ENCODE measurements at regions of chr2 and their contacts with region 1.

Region 1: GRCh38 chr2:158753641-158754611 is 41.2 kb upstream of the DAPL1 start:
- DNase-seq: peak; percentile 17 to 56
- H3K4me3 ChIP-seq: peak overlapping the region in 1 of 4 experiments; percentile 39; a peak in 1 of 8 replicates
- H3K27ac ChIP-seq: no peak overlapping the region
- H3K4me1 ChIP-seq: peaks cover 0 to 2% (median 0%) of the 10 kb centered on the region in 4 experiments; a peak in 1 of 7 replicates
- H3K27me3 ChIP-seq: no peaks in the 10 kb centered on the region
- CTCF ChIP-seq: peak; percentile 50 to 88 (median 88)
- EP300 ChIP-seq: no peak
- POLR2A ChIP-seq: no peak
- RAD21 ChIP-seq: peak; percentile 87 to 89

Region 2: DNA sequence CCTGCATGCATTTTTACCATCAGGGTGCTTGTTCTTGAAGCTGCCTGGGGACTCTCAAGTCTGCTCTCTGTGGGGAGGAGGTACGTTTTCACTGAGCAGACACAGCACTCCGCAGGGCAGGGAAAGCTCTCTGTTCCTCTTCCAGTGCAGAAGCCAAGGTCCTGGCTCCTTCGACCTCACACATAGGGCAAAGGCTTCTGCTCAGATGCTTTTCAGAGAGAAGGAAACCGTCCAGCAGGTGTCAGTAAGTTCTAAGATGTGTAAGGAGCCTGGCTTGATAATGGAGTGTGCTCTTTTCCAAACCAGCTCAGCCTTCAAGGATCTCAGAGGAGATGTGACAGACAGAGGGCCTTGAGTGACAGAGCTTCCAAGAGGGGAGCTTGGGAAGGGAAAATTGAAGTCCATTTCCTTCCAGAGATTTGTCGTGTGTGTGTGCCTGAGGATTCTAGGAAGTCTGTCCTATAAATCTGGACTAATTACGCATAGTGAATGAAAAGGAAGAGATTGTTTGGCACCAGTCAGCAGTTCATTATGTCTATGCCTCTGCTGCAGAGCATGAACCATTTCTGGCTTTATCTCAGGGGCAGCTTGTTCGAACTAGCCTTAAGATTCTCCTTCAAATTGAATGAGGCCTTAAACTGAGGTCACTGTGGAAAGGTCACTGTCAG is 719.6 kb before region 1 on chr2:
- CTCF ChIA-PET with region 1: interaction called, 89 read pairs
- POLR2A ChIA-PET with region 1: no interaction called
- DNase-seq: no peak
- H3K4me3 ChIP-seq: no peak overlapping the region
- H3K27ac ChIP-seq: no peak overlapping the region
- H3K4me1 ChIP-seq: no peaks in the 10 kb centered on the region
- H3K27me3 ChIP-seq: no peaks in the 10 kb centered on the region
- CTCF ChIP-seq: peak in 2 of 3 experiments; percentile 80 to 81; a peak in 3 of 4 replicates
- EP300 ChIP-seq: no peak
- POLR2A ChIP-seq: no peak
- RAD21 ChIP-seq: peak; percentile 90 to 94

Region 3: DNA sequence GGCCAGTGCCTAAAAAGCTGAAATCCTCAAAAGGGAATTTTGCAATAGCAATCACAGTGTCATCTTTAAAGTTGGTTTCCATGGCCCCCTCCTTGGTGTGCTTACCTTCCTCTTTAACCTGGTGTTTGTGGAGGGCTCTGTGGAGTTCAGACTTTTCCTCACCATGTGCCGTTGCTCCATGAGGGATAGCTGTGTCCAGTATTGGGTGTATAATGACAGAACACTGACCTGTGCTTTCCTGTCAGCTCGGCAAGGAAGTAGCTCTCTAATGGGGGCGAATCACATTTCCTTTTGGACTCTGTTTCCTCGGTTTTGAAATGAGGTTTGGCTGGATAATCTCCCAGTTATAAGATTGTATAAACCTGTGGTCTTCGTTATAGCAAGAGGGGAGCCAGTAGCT is 124.8 kb before region 1 on chr2:
- CTCF ChIA-PET with region 1: no interaction called
- POLR2A ChIA-PET with region 1: no interaction called
- DNase-seq: no peak
- H3K4me3 ChIP-seq: no peak overlapping the region
- H3K27ac ChIP-seq: no peak overlapping the region
- H3K4me1 ChIP-seq: no peaks in the 10 kb centered on the region
- H3K27me3 ChIP-seq: no peaks in the 10 kb centered on the region
- CTCF ChIP-seq: no peak
- EP300 ChIP-seq: no peak
- POLR2A ChIP-seq: no peak
- RAD21 ChIP-seq: no peak

Region 4: DNA sequence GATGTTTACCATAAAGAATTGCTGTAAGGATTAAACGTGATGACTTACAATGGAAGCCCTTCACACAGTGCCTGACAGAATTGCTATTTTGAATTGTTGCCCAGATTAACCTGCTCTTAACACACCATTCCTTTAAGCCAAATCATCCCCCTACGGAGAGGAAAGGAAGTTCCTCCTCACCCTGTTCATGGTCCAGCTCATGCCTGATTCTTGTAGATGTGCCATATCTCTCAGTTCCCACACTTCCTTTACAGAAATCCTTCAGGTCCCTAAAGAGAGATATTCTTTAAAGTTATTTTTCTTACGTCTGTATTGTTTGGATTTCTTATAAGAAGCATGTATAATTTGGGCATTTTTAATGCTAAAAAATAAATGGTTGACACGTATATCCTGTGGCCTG is 86.3 kb before region 1 on chr2:
- CTCF ChIA-PET with region 1: interaction called, 12 read pairs
- POLR2A ChIA-PET with region 1: no interaction called
- DNase-seq: no peak
- H3K4me3 ChIP-seq: no peak overlapping the region
- H3K27ac ChIP-seq: no peak overlapping the region
- H3K4me1 ChIP-seq: no peaks in the 10 kb centered on the region
- H3K27me3 ChIP-seq: no peaks in the 10 kb centered on the region
- CTCF ChIP-seq: no peak
- EP300 ChIP-seq: no peak
- POLR2A ChIP-seq: no peak
- RAD21 ChIP-seq: no peak

Region 5: GRCh38 chr2:158716121-158716771 is 37.7 kb before region 1 on chr2:
- CTCF ChIA-PET with region 1: interaction called, 416 read pairs
- POLR2A ChIA-PET with region 1: no interaction called
- DNase-seq: no peak
- H3K4me3 ChIP-seq: no peak overlapping the region
- H3K27ac ChIP-seq: no peak overlapping the region
- H3K4me1 ChIP-seq: no peaks in the 10 kb centered on the region
- H3K27me3 ChIP-seq: no peaks in the 10 kb centered on the region
- CTCF ChIP-seq: no peak
- EP300 ChIP-seq: no peak
- POLR2A ChIP-seq: no peak
- RAD21 ChIP-seq: no peak

Region 6: GRCh38 chr2:158773121-158773520 is 19.2 kb after region 1 on chr2:
- CTCF ChIA-PET with region 1: interaction called, 116 read pairs
- POLR2A ChIA-PET with region 1: no interaction called
- DNase-seq: no peak
- H3K4me3 ChIP-seq: no peak overlapping the region
- H3K27ac ChIP-seq: no peak overlapping the region
- H3K4me1 ChIP-seq: peaks cover 0 to 5% (median under 1%) of the 10 kb centered on the region in 4 experiments; a peak in 4 of 7 replicates
- H3K27me3 ChIP-seq: no peaks in the 10 kb centered on the region
- CTCF ChIP-seq: no peak
- EP300 ChIP-seq: no peak
- POLR2A ChIP-seq: no peak
- RAD21 ChIP-seq: no peak

Region 7: GRCh38 chr2:158828493-158829164 is 74.7 kb after region 1 on chr2:
- CTCF ChIA-PET with region 1: interaction called, 14 read pairs
- POLR2A ChIA-PET with region 1: no interaction called
- DNase-seq: no peak
- H3K4me3 ChIP-seq: no peak overlapping the region
- H3K27ac ChIP-seq: no peak overlapping the region
- H3K4me1 ChIP-seq: no peaks in the 10 kb centered on the region
- H3K27me3 ChIP-seq: no peaks in the 10 kb centered on the region
- CTCF ChIP-seq: no peak
- EP300 ChIP-seq: no peak
- POLR2A ChIP-seq: no peak
- RAD21 ChIP-seq: no peak

Measured in H1 (cell line).